ENCODE measurements at regions of chr12 and their contacts with region 1.

Region 1: DNA sequence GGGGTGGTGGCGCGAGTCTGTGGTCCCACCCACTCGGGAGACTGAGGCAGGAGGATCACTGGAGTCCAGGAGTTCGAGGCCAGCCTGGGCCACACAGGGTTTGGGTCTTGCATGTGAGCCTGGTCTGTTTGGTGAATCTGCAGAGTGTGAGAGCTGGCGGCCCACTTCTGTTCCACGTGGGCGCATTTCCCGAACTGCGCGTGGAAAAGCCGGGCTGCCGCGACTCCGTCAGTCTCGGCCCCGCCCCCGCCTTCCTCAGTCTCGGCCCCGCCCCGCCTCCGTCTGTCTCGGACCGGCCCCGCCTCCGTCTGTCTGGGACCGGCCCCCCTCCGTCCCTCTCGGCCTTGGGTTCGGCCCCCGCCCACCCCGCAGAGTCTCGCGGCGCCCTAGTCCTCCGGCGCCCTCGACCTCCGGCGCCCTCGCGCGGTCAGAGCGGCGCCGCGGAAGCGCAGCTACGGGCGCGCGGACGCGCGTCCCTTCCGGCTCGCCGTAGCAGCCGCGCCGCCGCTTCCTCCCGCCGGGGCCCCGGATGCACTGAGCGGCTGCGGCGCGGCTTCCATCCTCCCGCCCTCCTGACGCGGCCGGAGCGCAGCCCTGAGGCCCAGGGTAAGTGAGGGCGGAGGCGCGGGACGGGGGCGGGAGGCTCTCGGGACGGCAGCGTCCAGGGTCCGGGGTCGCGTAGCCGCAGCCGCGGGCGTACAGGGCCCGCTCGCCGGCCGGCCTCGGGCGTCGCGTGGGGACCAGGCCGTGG is at the start of gene EP400:
- DNase-seq: peak; percentile 95
- H3K4me3 ChIP-seq: peak within 1 kb of the TSS; percentile 98 to 99
- H3K27ac ChIP-seq: peak within 1 kb of the TSS; percentile 63 to 75
- H3K4me1 ChIP-seq: no peaks in the 10 kb centered on the region
- H3K27me3 ChIP-seq: no peaks in the 10 kb centered on the region
- CTCF ChIP-seq: peak; percentile 34 to 76 (median 70)
- POLR2A ChIP-seq: peak; percentile 35
- total RNA-seq, gene EP400: 22.3 to 46.2 TPM

Region 2: GRCh38 chr12:131894313-131894860 is 55.2 kb before region 1 on chr12 and contains the start of gene ULK1:
- intact Hi-C with region 1: loop called (anchors 1 kb)
- DNase-seq: peak; percentile 89
- H3K4me3 ChIP-seq: peak within 1 kb of the TSS; percentile 62 to 78
- H3K27ac ChIP-seq: peak within 1 kb of the TSS; percentile 99 to 100
- H3K4me1 ChIP-seq: no peaks in the 10 kb centered on the region
- H3K27me3 ChIP-seq: no peaks in the 10 kb centered on the region
- CTCF ChIP-seq: no peak
- POLR2A ChIP-seq: peak; percentile 97
- total RNA-seq, gene ULK1: 26.2 to 62.5 TPM

Region 3: GRCh38 chr12:131928711-131929580 is 20.7 kb before region 1 on chr12 and contains the start of gene PUS1:
- intact Hi-C with region 1: loop called (anchors 2 kb)
- DNase-seq: peak; percentile 92
- H3K4me3 ChIP-seq: peak within 1 kb of the TSS; percentile 58 to 64
- H3K27ac ChIP-seq: peak within 1 kb of the TSS; percentile 80
- H3K4me1 ChIP-seq: no peaks in the 10 kb centered on the region
- H3K27me3 ChIP-seq: no peaks in the 10 kb centered on the region
- CTCF ChIP-seq: peak in 1 of 4 experiments; percentile 13
- POLR2A ChIP-seq: peak; percentile 68
- total RNA-seq, gene PUS1: 17.4 to 17.8 TPM